ENCODE measurements at regions of chr1 and their contacts with region 1.

Region 1: GRCh38 chr1:211133836-211134669 is at the start of gene KCNH1:
- DNase-seq: peak; percentile 91
- ATAC-seq: peak; percentile 92
- H3K4me3 Mint-ChIP-seq: peak within 1 kb of the TSS; percentile 54
- H3K27ac Mint-ChIP-seq: peak within 1 kb of the TSS; percentile 26
- H3K4me1 Mint-ChIP-seq: peaks cover 13% of the 10 kb centered on the region
- H3K27me3 Mint-ChIP-seq: peaks cover 41% of the 10 kb centered on the region
- total RNA-seq, gene KCNH1: not detected

Region 2: GRCh38 chr1:210407207-210407886 is 726.7 kb before region 1 on chr1:
- CTCF ChIA-PET with region 1: interaction called, 47 read pairs
- POLR2A ChIA-PET with region 1: no interaction called
- intact Hi-C with region 1: loop called (anchors 1 kb)
- DNase-seq: peak; percentile 88
- ATAC-seq: peak; percentile 83
- H3K4me3 Mint-ChIP-seq: no peak overlapping the region
- H3K27ac Mint-ChIP-seq: no peak overlapping the region
- H3K4me1 Mint-ChIP-seq: peaks cover 4% of the 10 kb centered on the region
- H3K27me3 Mint-ChIP-seq: no peaks in the 10 kb centered on the region

Region 3: GRCh38 chr1:210696709-210697108 is 437.3 kb before region 1 on chr1:
- CTCF ChIA-PET with region 1: no interaction called
- POLR2A ChIA-PET with region 1: no interaction called
- intact Hi-C with region 1: loop called in 1 of 2 experiments (anchors 5 kb)
- DNase-seq: peak; percentile 17
- ATAC-seq: peak; percentile 83
- H3K4me3 Mint-ChIP-seq: no peak overlapping the region
- H3K27ac Mint-ChIP-seq: no peak overlapping the region
- H3K4me1 Mint-ChIP-seq: peaks cover 14% of the 10 kb centered on the region
- H3K27me3 Mint-ChIP-seq: no peaks in the 10 kb centered on the region

Region 4: DNA sequence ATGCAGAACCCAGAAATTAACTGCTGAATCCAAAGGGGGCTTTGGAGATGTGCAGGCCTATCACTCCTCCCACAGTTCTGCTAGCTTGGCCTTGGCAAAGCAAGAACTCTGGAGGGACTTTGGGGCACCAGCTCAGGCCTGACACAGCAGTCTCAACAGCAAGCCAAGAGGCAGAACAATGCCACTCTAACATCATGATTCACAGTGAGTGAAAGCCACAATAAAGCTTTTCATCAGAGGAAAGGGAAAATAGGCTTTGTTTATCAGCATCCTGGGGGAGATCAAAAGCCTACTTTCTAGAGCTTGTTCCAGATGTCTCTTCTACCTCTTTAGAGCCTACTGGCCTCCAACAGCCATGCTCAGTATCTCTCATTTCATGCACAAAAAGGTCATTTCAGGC is 283.5 kb before region 1 on chr1:
- CTCF ChIA-PET with region 1: no interaction called
- POLR2A ChIA-PET with region 1: no interaction called
- intact Hi-C with region 1: no loop called
- DNase-seq: no peak
- ATAC-seq: peak; percentile 19
- H3K4me3 Mint-ChIP-seq: no peak overlapping the region
- H3K27ac Mint-ChIP-seq: no peak overlapping the region
- H3K4me1 Mint-ChIP-seq: no peaks in the 10 kb centered on the region
- H3K27me3 Mint-ChIP-seq: no peaks in the 10 kb centered on the region

Region 5: GRCh38 chr1:211068976-211069375 is 65.1 kb before region 1 on chr1:
- CTCF ChIA-PET with region 1: no interaction called
- POLR2A ChIA-PET with region 1: no interaction called
- intact Hi-C with region 1: no loop called
- DNase-seq: no peak
- ATAC-seq: no peak
- H3K4me3 Mint-ChIP-seq: no peak overlapping the region
- H3K27ac Mint-ChIP-seq: no peak overlapping the region
- H3K4me1 Mint-ChIP-seq: no peaks in the 10 kb centered on the region
- H3K27me3 Mint-ChIP-seq: peaks cover 6% of the 10 kb centered on the region

Region 6: GRCh38 chr1:211118407-211119102 is 15.5 kb before region 1 on chr1:
- CTCF ChIA-PET with region 1: interaction called, 10 read pairs
- POLR2A ChIA-PET with region 1: no interaction called
- intact Hi-C with region 1: no loop called
- DNase-seq: no peak
- ATAC-seq: no peak
- H3K4me3 Mint-ChIP-seq: no peak overlapping the region
- H3K27ac Mint-ChIP-seq: no peak overlapping the region
- H3K4me1 Mint-ChIP-seq: no peaks in the 10 kb centered on the region
- H3K27me3 Mint-ChIP-seq: peaks cover 28% of the 10 kb centered on the region

Region 7: GRCh38 chr1:211386921-211387320 is 252.9 kb after region 1 on chr1:
- CTCF ChIA-PET with region 1: no interaction called
- POLR2A ChIA-PET with region 1: no interaction called
- intact Hi-C with region 1: no loop called
- DNase-seq: no peak
- ATAC-seq: no peak
- H3K4me3 Mint-ChIP-seq: no peak overlapping the region
- H3K27ac Mint-ChIP-seq: no peak overlapping the region
- H3K4me1 Mint-ChIP-seq: peaks cover 14% of the 10 kb centered on the region
- H3K27me3 Mint-ChIP-seq: no peaks in the 10 kb centered on the region

Region 8: GRCh38 chr1:211557894-211558625 is 424.0 kb after region 1 on chr1:
- CTCF ChIA-PET with region 1: no interaction called
- POLR2A ChIA-PET with region 1: no interaction called
- intact Hi-C with region 1: no loop called
- DNase-seq: no peak
- ATAC-seq: no peak
- H3K4me3 Mint-ChIP-seq: no peak overlapping the region
- H3K27ac Mint-ChIP-seq: no peak overlapping the region
- H3K4me1 Mint-ChIP-seq: no peaks in the 10 kb centered on the region
- H3K27me3 Mint-ChIP-seq: peaks cover 2% of the 10 kb centered on the region

Region 9: DNA sequence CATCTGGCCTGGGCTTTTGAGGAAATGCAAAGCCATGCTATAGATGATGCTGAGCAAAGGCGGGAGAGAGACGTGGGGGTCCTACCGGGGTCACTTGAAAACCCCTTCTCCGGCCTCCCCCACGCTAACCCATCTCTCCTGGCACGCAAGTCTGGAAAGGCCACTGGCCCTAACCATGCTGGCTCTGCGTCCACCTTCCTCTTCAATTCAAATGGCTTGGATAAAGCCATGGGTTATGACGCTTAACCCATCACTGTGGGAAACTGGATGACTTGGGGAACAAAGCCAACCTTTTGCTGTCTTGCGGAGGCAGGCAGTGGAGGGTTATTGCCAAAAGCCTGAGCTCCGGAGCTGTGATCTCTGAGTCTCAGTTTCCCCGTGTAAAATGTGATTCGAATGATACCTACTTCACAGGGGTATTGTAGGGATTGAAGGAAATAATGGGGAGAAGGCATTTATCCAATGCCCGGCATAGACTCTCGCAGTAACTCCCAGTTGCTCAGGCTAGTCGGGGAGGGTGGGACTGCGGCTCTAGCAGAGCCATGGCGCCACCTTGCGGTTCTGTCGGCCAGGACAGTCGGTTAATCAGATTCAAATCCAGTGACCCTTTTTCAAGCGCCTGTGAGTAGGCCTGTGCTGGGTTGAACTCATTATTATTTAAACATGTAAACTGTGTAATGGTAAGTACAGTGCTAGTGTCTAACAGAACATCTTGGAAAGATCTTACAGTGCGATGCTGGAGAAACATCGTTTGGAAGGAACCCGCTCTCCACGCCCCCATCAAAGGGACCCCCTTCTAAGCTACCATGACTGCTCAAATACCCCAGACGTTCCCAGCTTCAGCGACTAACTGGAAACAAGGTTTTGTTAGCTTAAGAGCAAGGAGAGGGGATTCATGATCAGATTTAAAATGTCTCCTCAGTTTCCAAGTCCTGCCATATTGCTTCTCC is 521.1 kb after region 1 on chr1:
- CTCF ChIA-PET with region 1: no interaction called
- POLR2A ChIA-PET with region 1: no interaction called
- intact Hi-C with region 1: loop called in 1 of 2 experiments (anchors 2 kb)
- DNase-seq: peak; percentile 91
- ATAC-seq: peak; percentile 100
- H3K4me3 Mint-ChIP-seq: no peak overlapping the region
- H3K27ac Mint-ChIP-seq: no peak overlapping the region
- H3K4me1 Mint-ChIP-seq: no peaks in the 10 kb centered on the region
- H3K27me3 Mint-ChIP-seq: peaks cover 1% of the 10 kb centered on the region

Measured in activated CD4-positive, alpha-beta T cell treated with anti-CD3 and anti-CD28 coated beads for 36 hours (primary cell).